ENCODE measurements at regions of chr5 and their contacts with region 1.

Region 1: DNA sequence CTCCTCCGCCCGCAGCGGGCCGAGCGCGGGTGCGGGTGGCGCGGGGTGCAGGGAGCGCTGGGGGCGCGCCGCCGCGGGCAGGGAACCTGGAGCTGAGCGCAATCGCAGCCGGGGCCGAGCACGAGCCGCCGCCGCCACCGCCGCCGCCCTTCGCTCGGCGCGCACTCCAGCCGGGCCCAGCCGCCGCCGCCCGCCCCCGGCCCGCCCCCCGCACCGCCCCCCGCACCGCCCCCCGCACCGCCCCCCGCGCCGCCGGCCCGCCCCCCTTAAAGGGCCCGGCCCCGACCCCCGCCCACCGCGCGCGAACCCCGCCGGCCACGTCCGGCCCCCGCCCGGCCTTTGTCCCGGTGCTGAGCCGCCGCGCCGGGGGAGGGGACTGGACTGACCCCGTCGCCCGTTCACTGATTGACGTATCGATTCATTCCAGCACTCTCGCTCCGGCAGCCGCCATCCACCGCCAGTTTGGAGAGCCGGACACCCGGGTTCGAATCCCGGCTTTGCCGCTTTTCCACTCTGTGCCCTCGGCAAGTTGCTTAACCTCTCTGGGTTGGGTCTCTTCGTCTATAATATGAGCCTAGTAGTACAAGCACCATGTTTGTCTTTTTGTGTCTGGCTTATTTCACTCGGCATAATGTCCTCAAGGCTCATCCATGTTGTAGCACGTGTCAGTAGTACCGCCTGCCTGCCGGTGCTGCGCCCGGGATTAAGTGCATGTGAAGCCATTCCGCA is at the start of gene SH3PXD2B:
- DNase-seq: peak; percentile 51
- H3K4me3 ChIP-seq: peak within 1 kb of the TSS; percentile 92 to 98 (median 95)
- H3K27ac ChIP-seq: peak within 1 kb of the TSS; percentile 63
- H3K4me1 ChIP-seq: peaks cover 36% of the 10 kb centered on the region
- H3K27me3 ChIP-seq: no peaks in the 10 kb centered on the region
- CTCF ChIP-seq: no peak
- POLR2A ChIP-seq: peak; percentile 61
- total RNA-seq, gene SH3PXD2B: 66.3 and 71.8 TPM in 2 replicates

Region 2: DNA sequence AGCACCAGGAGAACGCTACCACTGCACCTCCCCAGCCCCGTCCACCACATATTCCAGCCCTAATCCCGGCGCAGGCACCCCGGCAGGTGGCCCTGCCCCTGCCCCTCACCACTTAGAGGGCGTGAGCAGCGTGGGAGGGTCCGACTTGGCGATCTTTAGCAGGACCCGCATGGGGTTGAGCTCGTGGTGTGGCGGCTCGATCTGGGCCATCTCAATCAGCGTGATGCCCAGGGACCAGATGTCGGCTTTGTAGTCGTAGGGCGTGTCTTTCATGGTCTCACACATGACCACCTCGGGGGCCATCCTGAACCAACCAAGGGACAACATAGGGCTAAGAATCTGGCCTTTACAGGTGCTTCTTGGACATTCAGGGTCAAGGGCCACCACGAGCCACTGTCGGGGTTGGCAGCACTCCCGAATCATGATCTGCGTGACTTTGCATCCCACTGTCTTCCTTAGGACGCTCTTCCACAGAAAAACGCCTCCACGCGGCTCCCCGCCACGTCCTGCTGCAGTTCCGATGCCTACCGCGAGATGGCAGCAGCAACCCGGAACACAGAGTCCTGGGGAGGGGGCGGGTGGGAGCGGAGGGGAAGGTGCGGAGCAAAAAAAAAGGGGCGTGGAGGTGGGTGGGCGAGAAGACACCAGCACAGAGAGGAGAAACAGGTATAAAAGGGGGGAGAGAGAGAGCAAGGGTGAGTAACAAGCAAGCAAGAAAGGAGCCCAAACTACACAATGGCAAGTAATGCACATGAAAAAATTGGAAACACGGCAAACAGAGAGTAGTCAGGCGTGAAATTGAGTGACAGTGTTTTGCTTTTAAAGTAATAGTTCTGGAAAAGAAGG is 347.8 kb before region 1 on chr5:
- CTCF ChIA-PET with region 1: no interaction called
- POLR2A ChIA-PET with region 1: no interaction called
- dilution Hi-C with region 1: no loop called
- intact Hi-C with region 1: loop called (anchors 2 kb)
- DNase-seq: peak; percentile 46
- H3K4me3 ChIP-seq: no peak overlapping the region
- H3K27ac ChIP-seq: no peak overlapping the region
- H3K4me1 ChIP-seq: peaks cover 34% of the 10 kb centered on the region
- H3K27me3 ChIP-seq: no peaks in the 10 kb centered on the region
- CTCF ChIP-seq: peak; percentile 78 to 97
- POLR2A ChIP-seq: no peak

Region 3: GRCh38 chr5:172383191-172383802 is 71.2 kb before region 1 on chr5:
- CTCF ChIA-PET with region 1: interaction called, 13 read pairs
- POLR2A ChIA-PET with region 1: no interaction called
- dilution Hi-C with region 1: no loop called
- intact Hi-C with region 1: no loop called
- DNase-seq: no peak
- H3K4me3 ChIP-seq: no peak overlapping the region
- H3K27ac ChIP-seq: no peak overlapping the region
- H3K4me1 ChIP-seq: peaks cover 3% of the 10 kb centered on the region
- H3K27me3 ChIP-seq: no peaks in the 10 kb centered on the region
- CTCF ChIP-seq: no peak
- POLR2A ChIP-seq: no peak

Region 4: DNA sequence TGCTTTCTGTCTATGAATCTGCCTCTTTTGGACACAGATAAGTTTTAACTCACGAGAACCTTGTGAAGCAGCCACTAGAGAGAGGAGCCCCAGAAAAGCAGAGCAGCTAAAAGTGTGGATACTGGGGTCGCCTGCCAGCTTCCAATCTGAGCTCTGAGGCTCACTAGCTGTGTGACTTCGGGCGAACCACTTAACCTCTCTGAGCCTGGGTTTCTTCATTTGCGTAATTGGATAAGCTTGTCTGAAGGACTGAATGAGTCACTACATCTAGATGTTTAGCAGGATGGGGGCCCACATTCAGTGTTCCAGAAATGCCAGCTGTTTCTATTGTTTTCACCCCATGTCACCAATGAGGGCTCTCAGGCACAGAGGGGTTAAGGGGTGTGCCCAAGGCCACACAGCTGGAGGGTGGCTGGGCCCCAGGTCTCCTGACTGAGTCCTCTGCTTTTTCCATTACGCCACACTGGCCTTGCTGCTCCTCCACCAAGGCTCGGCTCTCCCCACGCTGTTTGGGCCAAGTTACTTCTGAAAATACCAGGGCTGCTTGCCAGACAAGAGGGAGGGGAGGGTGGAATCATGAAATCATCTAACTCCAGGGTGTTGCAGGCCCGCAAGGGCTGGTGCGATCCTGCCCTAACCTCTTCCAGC is 36.4 kb before region 1 on chr5:
- CTCF ChIA-PET with region 1: interaction called, 12 read pairs
- POLR2A ChIA-PET with region 1: no interaction called
- dilution Hi-C with region 1: no loop called
- intact Hi-C with region 1: loop called (anchors 2 kb)
- DNase-seq: peak; percentile 80
- H3K4me3 ChIP-seq: no peak overlapping the region
- H3K27ac ChIP-seq: no peak overlapping the region
- H3K4me1 ChIP-seq: peaks cover 21% of the 10 kb centered on the region
- H3K27me3 ChIP-seq: no peaks in the 10 kb centered on the region
- CTCF ChIP-seq: no peak
- POLR2A ChIP-seq: no peak

Region 5: GRCh38 chr5:172437445-172438308 is 16.8 kb before region 1 on chr5:
- CTCF ChIA-PET with region 1: interaction called, 31 read pairs
- POLR2A ChIA-PET with region 1: no interaction called
- dilution Hi-C with region 1: no loop called
- intact Hi-C with region 1: loop called (anchors 1 kb)
- DNase-seq: peak; percentile 95
- H3K4me3 ChIP-seq: no peak overlapping the region
- H3K27ac ChIP-seq: peak overlapping the region; percentile 40
- H3K4me1 ChIP-seq: peaks cover 14% of the 10 kb centered on the region
- H3K27me3 ChIP-seq: no peaks in the 10 kb centered on the region
- CTCF ChIP-seq: no peak
- POLR2A ChIP-seq: no peak

Region 6: DNA sequence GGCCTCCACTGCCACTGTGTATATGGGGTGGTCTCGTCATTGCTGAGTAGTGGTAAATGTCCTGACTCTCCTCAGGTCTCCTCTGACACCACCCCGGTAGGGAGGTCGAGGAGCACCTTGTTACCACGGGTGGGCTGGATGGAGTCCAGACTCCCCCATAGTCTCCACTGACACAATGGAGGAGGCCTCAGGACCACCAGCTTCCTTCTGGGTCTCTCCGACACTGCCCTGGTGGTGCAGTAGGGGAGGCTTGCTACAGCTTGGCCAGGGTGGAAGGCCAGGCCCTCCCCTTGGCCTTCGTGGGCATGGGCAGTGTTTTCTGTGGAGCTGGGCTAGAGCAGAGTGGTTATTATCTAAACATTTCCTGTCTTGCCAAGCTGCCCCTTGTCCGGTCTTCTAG is 15.2 kb after region 1 on chr5:
- CTCF ChIA-PET with region 1: interaction called, 16 read pairs
- POLR2A ChIA-PET with region 1: no interaction called
- dilution Hi-C with region 1: no loop called
- intact Hi-C with region 1: no loop called
- DNase-seq: no peak
- H3K4me3 ChIP-seq: no peak overlapping the region
- H3K27ac ChIP-seq: no peak overlapping the region
- H3K4me1 ChIP-seq: no peaks in the 10 kb centered on the region
- H3K27me3 ChIP-seq: peaks cover 7 to 13% of the 10 kb centered on the region in 2 experiments
- CTCF ChIP-seq: no peak
- POLR2A ChIP-seq: no peak

Region 7: GRCh38 chr5:173057062-173057924 is 602.8 kb after region 1 on chr5:
- CTCF ChIA-PET with region 1: no interaction called
- POLR2A ChIA-PET with region 1: no interaction called
- dilution Hi-C with region 1: no loop called
- intact Hi-C with region 1: loop called (anchors 2 kb)
- DNase-seq: peak; percentile 99
- H3K4me3 ChIP-seq: peak overlapping the region; percentile 83 to 89 (median 86)
- H3K27ac ChIP-seq: peak overlapping the region; percentile 86
- H3K4me1 ChIP-seq: peaks cover 13% of the 10 kb centered on the region
- H3K27me3 ChIP-seq: no peaks in the 10 kb centered on the region
- CTCF ChIP-seq: peak in 1 of 2 donors; percentile 28
- POLR2A ChIP-seq: peak; percentile 37

Measured in endothelial cell of umbilical vein (primary cell).